ENCODE measurements at regions of chr12 and their contacts with region 1.

Region 1: DNA sequence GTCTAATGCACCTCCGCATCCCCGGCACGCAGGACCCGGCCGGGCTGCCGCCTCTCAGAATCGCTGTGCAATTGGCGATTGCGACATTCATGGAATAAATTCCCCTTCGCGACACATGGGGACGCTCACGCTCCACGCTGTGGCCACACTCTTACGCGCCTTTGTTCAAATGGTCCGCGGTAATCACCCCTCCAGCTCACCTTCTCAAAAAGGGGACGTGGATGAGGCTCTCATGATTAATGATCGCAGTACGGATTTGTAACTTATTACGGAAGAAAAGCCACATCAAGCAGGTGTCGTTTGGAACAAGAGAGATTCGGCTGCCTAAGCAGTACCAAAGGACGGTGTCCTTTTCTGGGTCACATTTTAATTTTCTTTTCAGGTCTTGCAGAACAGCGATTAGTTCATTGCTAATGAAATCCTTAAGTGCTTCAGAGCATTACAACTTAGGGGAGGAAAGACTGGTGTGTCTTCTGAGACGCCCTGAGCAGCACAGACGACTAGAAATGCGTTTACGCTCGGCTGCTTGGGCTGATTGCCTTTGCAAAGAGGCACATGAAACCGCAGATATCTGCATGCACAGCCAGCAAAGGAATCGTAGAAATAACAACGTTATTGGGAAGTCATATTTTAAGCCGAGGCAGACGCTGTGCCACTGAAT is 37.3 kb upstream of the ADGRD1 start:
- DNase-seq: peak; percentile 66 to 79
- H3K4me3 ChIP-seq: peak overlapping the region in 1 of 2 donors; percentile 15
- H3K27ac ChIP-seq: peak overlapping the region in 1 of 2 donors; percentile 11
- H3K4me1 ChIP-seq: no peaks in the 10 kb centered on the region
- H3K27me3 ChIP-seq: no peaks in the 10 kb centered on the region
- CTCF ChIP-seq: peak; percentile 89 to 99 (median 96)
- POLR2A ChIP-seq: no peak

Region 2: GRCh38 chr12:131132118-131132892 is 215.9 kb after region 1 on chr12:
- intact Hi-C with region 1: loop called (anchors 10 kb)
- DNase-seq: peak; percentile 67 to 81
- H3K4me3 ChIP-seq: no peak overlapping the region
- H3K27ac ChIP-seq: peak overlapping the region in 1 of 2 donors; percentile 33
- H3K4me1 ChIP-seq: peaks cover 6 to 7% of the 10 kb centered on the region in 2 donors
- H3K27me3 ChIP-seq: no peaks in the 10 kb centered on the region
- CTCF ChIP-seq: peak; percentile 66 to 73 (median 70)
- POLR2A ChIP-seq: no peak